Psoas muscle (tissue), 8 donors: ENCODE measurements at regions of chr17 and their contacts with region 1.

Region 1: DNA sequence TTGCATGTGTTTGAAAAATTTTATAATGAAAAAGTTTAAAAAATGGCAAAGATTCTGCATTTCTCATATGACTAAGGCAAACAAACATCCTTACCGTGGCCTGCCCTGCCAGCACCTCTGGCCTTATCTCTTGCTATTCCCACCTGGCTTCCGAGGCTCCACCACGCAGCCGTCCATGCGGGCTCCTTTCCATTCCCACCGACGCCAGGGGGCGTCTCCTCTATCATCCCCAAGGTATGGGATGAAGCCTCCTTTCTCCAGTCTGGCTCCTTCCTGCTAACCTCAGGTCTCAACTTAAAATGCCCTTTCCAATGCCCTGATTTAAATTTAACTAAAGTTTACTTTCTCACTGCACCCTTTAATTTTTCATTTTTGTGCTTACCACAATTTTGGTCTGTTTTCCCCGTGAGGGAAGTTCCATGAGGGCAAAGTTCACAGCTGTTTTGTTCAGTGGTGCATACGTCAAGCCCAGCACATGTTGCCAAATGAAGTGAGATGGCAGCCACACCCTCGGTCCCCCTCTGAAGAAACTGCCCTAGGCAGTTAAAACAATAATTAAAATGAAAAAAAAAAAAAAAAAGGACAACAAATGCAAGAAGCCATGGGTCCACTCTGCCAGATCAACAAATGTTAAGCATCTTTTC is 13.3 kb upstream of the SDK2 start:
- DNase-seq: no peak
- ATAC-seq: peak in 1 of 4 donors; percentile 68
- H3K4me3 ChIP-seq: no peak overlapping the region
- H3K27ac ChIP-seq: no peak overlapping the region
- H3K4me1 ChIP-seq: no peaks in the 10 kb centered on the region
- H3K27me3 ChIP-seq: peaks cover 0 to 23% (median 2%) of the 10 kb centered on the region in 3 donors
- CTCF ChIP-seq: peak; percentile 28

Region 2: GRCh38 chr17:73613271-73614233 is 44.0 kb before region 1 on chr17:
- intact Hi-C with region 1: no loop called
- DNase-seq: peak in 1 of 2 donors; percentile 29
- ATAC-seq: no peak
- H3K4me3 ChIP-seq: no peak overlapping the region
- H3K27ac ChIP-seq: no peak overlapping the region
- H3K4me1 ChIP-seq: no peaks in the 10 kb centered on the region
- H3K27me3 ChIP-seq: peaks cover 0 to 21% (median 0%) of the 10 kb centered on the region in 3 donors
- CTCF ChIP-seq: no peak

Region 3: GRCh38 chr17:73956669-73957465 is 299.3 kb after region 1 on chr17:
- intact Hi-C with region 1: loop called in 1 of 2 experiments (anchors 10 kb)
- DNase-seq: no peak
- ATAC-seq: no peak
- H3K4me3 ChIP-seq: no peak overlapping the region
- H3K27ac ChIP-seq: no peak overlapping the region
- H3K4me1 ChIP-seq: no peaks in the 10 kb centered on the region
- H3K27me3 ChIP-seq: peaks cover under 1 to 21% (median 20%) of the 10 kb centered on the region in 3 donors
- CTCF ChIP-seq: peak; percentile 17

Region 4: DNA sequence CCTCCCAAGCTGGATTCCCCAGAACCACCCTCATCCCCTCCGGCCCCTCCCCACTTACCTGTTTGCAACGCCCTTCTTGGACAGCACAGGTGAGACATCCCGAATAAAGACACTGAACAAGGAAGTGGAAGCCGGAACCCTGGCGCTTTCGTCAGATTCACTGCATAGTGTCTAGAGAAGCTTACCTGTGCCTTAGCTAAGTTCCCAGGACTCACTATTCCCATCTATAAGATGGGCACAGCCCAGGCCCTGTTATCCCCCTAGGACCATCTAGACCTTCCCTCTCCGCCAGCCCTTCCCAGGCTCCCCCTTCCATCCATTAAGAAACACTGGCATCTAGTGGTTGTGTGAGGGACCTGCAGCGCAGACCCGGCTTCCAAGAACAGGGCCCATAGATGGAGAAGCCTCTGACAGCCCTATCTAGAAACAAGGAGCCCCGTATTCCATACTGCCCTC is 519.0 kb after region 1 on chr17:
- intact Hi-C with region 1: loop called in 1 of 2 experiments (anchors 10 kb)
- DNase-seq: peak in 1 of 2 donors; percentile 61
- ATAC-seq: peak; percentile 64 to 81 (median 80)
- H3K4me3 ChIP-seq: no peak overlapping the region
- H3K27ac ChIP-seq: no peak overlapping the region
- H3K4me1 ChIP-seq: no peaks in the 10 kb centered on the region
- H3K27me3 ChIP-seq: peaks cover 0 to 21% (median 6%) of the 10 kb centered on the region in 3 donors
- CTCF ChIP-seq: peak; percentile 75